Gastrocnemius medialis (tissue), 4 donors: ENCODE measurements at regions of chr22 and their contacts with region 1.

Region 1: GRCh38 chr22:18077639-18078328 is at the start of gene PEX26:
- DNase-seq: peak; percentile 95 to 96
- ATAC-seq: peak; percentile 89 to 90
- H3K4me3 ChIP-seq: peak within 1 kb of the TSS; percentile 72 to 98 (median 86)
- H3K27ac ChIP-seq: peak within 1 kb of the TSS; percentile 82 to 92 (median 90)
- H3K4me1 ChIP-seq: peaks cover 26 to 36% of the 10 kb centered on the region in 2 donors
- H3K27me3 ChIP-seq: no peaks in the 10 kb centered on the region
- CTCF ChIP-seq: no peak
- POLR2A ChIP-seq: peak; percentile 87 to 88
- total RNA-seq, gene PEX26: 16.4 to 24.7 (median 16.8) TPM

Region 2: GRCh38 chr22:17891481-17892167 is 186.2 kb before region 1 on chr22:
- in situ Hi-C with region 1: no loop called
- intact Hi-C with region 1: loop called (anchors 5 kb)
- DNase-seq: peak; percentile 73 to 85
- ATAC-seq: peak; percentile 37 to 49
- H3K4me3 ChIP-seq: no peak overlapping the region
- H3K27ac ChIP-seq: peak overlapping the region; percentile 90 to 95 (median 94)
- H3K4me1 ChIP-seq: peaks cover 41 to 45% of the 10 kb centered on the region in 2 donors
- H3K27me3 ChIP-seq: no peaks in the 10 kb centered on the region
- CTCF ChIP-seq: peak; percentile 79 to 89 (median 84)
- POLR2A ChIP-seq: no peak

Region 3: GRCh38 chr22:17903564-17904295 is 174.1 kb before region 1 on chr22:
- in situ Hi-C with region 1: loop called in 2 of 4 experiments (anchors 10 to 25 kb)
- intact Hi-C with region 1: no loop called
- DNase-seq: no peak
- ATAC-seq: peak; percentile 13 to 29
- H3K4me3 ChIP-seq: no peak overlapping the region
- H3K27ac ChIP-seq: peak overlapping the region; percentile 35 to 93 (median 44)
- H3K4me1 ChIP-seq: peaks cover 27 to 46% of the 10 kb centered on the region in 2 donors
- H3K27me3 ChIP-seq: no peaks in the 10 kb centered on the region
- CTCF ChIP-seq: no peak
- POLR2A ChIP-seq: no peak

Region 4: DNA sequence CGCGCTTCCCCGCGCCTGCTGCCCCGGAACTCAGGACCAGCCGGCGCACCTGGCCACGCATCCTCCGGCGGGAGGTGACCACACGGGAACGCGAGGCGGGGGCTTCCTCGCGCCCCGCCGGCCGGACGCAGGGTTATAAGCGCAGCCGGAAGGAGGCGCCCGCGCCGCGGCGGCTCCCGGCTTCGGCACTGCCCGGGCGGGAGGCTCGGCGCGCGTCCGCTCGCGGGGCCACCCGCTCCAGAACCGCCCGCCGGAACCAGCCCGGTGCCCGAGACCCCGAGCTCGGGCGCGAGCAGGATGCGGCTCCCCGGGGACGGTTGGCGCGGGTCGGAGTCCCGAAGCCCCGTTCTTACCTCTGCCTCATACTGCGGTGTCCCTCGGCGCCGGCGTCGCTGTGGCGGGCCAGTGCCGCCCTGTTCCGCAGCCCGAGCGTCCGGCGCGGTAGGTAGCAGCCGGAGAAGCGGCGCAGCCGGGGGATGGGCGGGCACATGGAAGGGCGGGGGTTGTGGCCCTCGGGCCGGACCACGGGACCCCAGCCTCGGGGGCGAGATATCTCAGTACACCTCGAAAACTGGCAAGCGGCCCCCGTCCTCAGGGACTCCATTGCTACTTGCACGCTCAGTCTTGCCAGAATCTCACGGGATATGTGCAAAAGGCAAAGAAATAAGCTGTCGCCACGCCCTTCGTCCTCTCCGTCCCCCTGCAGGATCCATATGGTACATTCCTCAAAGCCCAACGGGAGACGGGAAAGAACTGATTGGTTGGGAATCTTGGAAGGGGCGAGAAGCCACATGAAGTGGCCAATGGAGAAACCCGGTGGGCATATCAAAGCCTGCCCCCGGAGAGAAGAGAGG is 76.5 kb before region 1 on chr22:
- in situ Hi-C with region 1: loop called in 3 of 4 experiments (anchors 5 to 10 kb)
- intact Hi-C with region 1: loop called (anchors 1 kb)
- DNase-seq: peak; percentile 84 to 92
- ATAC-seq: peak; percentile 95 to 96
- H3K4me3 ChIP-seq: peak overlapping the region; percentile 62 to 89 (median 76)
- H3K27ac ChIP-seq: peak overlapping the region; percentile 85 to 95 (median 92)
- H3K4me1 ChIP-seq: peaks cover 15 to 24% of the 10 kb centered on the region in 2 donors
- H3K27me3 ChIP-seq: no peaks in the 10 kb centered on the region
- CTCF ChIP-seq: peak; percentile 46 to 82 (median 79)
- POLR2A ChIP-seq: peak; percentile 84 to 89